ENCODE measurements at regions of chr2 and their contacts with region 1.

Region 1: DNA sequence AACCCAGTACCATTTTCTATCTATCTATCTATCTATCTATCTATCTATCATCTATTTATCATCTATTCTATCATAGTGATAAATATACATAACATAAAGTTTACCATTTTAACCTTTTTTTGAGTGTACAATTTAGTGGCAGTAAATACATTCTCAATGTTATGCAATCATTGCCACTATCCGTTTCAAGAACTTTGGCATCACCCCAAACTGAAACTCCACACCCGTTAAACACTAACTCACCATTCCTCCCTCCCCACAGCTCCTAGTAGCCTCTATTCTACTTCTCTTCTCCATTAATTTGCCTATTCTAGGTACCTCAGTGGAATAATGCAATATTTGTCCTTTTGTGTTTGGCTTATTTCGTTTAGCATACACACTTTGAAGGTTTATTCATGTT is 82.5 kb upstream of the KCNE4 start:
- DNase-seq: no peak
- CTCF ChIP-seq: no peak

Region 2: DNA sequence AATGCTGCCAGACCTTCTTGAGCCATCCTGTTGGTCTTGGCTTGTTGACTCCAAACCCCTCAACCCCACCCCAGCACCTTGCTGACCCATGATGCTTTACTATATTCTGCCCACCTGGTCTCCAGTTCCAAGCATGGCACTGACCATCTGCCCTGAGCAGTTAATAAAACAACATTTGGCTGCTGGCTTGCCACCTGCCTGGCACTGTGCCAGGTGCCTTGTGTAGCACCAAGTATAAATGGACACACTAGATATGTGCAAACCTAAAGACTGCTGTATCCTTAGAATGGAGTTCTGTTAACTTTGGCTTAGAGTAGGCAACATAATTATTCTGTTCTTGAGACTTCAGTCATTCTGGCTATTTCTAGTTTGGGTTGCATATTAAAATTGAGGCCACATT is 17.3 kb before region 1 on chr2:
- CTCF ChIA-PET with region 1: interaction called, 32 read pairs
- POLR2A ChIA-PET with region 1: no interaction called
- DNase-seq: no peak
- CTCF ChIP-seq: no peak

Region 3: DNA sequence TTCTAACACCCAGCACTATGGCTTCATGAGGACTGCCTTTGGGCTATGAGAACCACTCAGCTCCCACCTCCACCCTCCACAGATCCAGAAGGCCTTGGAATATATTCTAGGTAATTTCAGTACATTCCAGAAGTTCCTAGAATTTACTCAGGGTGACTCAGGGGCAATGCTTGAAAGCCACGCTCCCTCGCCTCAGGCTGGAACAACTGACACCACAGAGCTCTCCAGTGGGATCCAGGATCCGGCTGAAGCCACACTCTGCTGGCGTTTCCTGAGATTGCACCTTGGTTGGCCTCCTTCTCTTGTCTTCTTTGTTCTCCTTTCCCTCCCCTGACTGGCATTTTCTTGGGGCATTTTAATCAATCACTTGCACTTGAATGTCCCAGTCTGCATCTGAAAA is 10.2 kb before region 1 on chr2:
- CTCF ChIA-PET with region 1: interaction called, 32 read pairs
- POLR2A ChIA-PET with region 1: no interaction called
- DNase-seq: no peak
- CTCF ChIP-seq: no peak

Region 4: GRCh38 chr2:222982010-222982908 is 12.8 kb after region 1 on chr2:
- CTCF ChIA-PET with region 1: interaction called, 49 read pairs
- POLR2A ChIA-PET with region 1: no interaction called
- DNase-seq: no peak
- CTCF ChIP-seq: peak; percentile 25

Region 5: GRCh38 chr2:223488814-223489213 is 519.3 kb after region 1 on chr2:
- CTCF ChIA-PET with region 1: no interaction called
- POLR2A ChIA-PET with region 1: no interaction called
- DNase-seq: no peak
- CTCF ChIP-seq: no peak

Measured in GM10248 (cell line).